Natural killer cell (primary cell): ENCODE measurements at regions of chr3 and their contacts with region 1.

Region 1: DNA sequence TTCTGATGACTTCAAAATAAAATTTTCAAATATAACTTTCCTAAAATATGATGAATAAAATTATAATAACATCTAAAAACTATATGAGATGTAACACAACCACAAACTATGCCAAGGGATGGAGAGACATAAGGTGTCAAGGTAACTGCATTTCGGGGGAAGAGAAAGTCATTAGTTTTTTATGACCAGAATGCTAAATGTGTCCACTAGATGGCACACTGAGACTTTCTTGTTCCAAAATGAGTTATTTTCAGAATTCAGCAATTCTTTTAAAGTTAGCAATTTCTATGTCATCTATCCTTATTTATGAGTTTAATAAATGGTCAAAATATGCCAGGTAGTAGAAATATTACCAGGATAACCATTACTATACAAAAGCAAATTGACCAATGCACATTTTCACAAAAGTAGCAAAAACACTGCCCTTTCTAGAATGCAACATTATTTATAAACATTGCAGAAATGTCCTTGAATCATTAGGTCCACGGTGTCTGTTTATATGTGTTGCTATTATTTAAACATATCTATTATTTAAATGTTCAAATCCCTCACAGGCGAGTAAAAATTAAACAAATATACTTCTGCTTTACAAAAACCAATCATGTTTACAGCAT is 374.2 kb downstream of the PLCL2 start:
- DNase-seq: peak in 1 of 2 donors; percentile 75
- ATAC-seq: peak in 1 of 3 donors; percentile 40
- H3K4me3 ChIP-seq: no peak overlapping the region
- H3K4me3 Mint-ChIP-seq: no peak overlapping the region
- H3K27ac ChIP-seq: no peak overlapping the region
- H3K27ac Mint-ChIP-seq: no peak overlapping the region
- H3K4me1 ChIP-seq: no peaks in the 10 kb centered on the region
- H3K4me1 Mint-ChIP-seq: no peaks in the 10 kb centered on the region
- H3K27me3 ChIP-seq: no peaks in the 10 kb centered on the region
- H3K27me3 Mint-ChIP-seq: no peaks in the 10 kb centered on the region
- CTCF ChIP-seq: peak; percentile 94

Region 2: DNA sequence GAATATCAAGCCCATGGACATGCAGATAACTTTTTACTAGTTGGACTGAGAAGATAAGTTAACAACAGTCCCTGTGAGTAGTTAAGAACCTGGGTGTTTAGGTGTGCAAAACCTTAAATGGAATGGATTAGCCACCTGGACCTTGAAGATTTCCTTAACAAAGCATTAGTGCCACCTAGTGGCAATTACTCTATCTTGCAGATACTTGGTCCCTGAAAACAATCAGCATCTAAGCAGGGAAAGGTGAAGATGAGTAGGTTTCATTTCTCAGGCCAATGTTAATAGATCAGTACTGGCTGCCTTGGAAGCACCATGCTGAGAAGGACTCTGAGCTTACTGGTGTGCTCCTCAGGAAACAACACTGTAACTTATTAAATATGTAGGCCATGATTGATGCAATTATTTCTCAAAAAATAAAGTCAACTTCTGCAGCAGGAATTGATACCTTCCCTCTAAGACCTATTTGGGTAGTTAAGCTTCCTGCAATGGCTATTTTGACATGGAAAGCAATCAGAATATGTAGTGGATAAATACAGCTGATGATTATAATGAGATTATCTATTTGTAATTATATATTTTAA is 154.1 kb after region 1 on chr3:
- intact Hi-C with region 1: loop called (anchors 1 kb)
- DNase-seq: peak in 1 of 2 donors; percentile 71
- ATAC-seq: peak; percentile 53 to 76 (median 69)
- H3K4me3 ChIP-seq: no peak overlapping the region
- H3K4me3 Mint-ChIP-seq: no peak overlapping the region
- H3K27ac ChIP-seq: no peak overlapping the region
- H3K27ac Mint-ChIP-seq: no peak overlapping the region
- H3K4me1 ChIP-seq: no peaks in the 10 kb centered on the region
- H3K4me1 Mint-ChIP-seq: no peaks in the 10 kb centered on the region
- H3K27me3 ChIP-seq: no peaks in the 10 kb centered on the region
- H3K27me3 Mint-ChIP-seq: no peaks in the 10 kb centered on the region
- CTCF ChIP-seq: peak; percentile 82